ENCODE measurements at regions of chr11 and their contacts with region 1.

Region 1: DNA sequence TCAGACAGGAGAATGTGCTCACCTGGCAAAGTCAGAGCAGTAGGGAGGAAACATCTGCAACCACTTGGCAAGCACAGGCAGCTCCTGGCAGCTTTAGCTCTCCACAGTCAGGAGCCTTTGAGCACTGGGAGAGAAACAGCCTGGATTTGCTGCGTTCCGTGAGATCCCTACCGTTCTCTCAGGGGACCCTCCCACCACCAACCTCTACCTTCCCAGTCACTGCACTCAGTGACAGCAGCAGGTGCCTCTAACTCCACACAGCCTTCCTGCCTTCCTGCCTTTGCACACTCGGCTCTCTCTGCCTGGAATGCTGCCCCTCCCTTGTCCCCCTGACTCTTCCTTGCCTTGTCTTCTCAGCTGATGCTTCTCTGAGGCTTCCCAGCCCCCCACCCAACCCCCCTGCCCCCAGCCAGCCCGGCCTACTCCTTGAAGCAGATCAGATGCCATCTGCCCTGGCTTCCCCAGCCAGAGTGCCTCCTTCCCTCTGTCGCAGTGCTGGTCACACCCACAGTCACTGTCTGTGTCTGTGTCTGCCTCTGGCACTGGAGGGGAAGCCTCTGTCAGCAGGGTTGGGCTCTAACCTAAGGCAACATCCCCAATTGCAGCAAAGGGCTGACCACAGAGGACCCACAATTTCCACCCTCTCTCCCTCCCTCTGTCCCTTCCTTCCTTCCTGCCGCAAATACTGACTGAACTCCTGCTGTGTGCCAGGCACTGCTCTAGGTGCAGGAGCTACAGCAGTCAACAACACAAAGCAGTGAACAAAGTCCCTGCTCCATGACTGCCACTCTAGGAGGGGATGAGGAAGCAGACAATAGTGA is 14.9 kb upstream of the TSKU start:
- DNase-seq: no peak
- H3K4me3 ChIP-seq: no peak overlapping the region
- H3K4me3 Mint-ChIP-seq: no peak overlapping the region
- H3K27ac Mint-ChIP-seq: peak overlapping the region; percentile 22
- H3K4me1 ChIP-seq: peaks cover 51% of the 10 kb centered on the region
- H3K4me1 Mint-ChIP-seq: peaks cover 46% of the 10 kb centered on the region
- H3K27me3 ChIP-seq: no peaks in the 10 kb centered on the region
- H3K27me3 Mint-ChIP-seq: no peaks in the 10 kb centered on the region
- CTCF ChIP-seq: no peak

Region 2: GRCh38 chr11:76637491-76638269 is 130.6 kb before region 1 on chr11:
- CTCF ChIA-PET with region 1: no interaction called
- POLR2A ChIA-PET with region 1: no interaction called
- intact Hi-C with region 1: no loop called
- DNase-seq: no peak
- H3K4me3 ChIP-seq: no peak overlapping the region
- H3K4me3 Mint-ChIP-seq: no peak overlapping the region
- H3K27ac Mint-ChIP-seq: no peak overlapping the region
- H3K4me1 ChIP-seq: no peaks in the 10 kb centered on the region
- H3K4me1 Mint-ChIP-seq: no peaks in the 10 kb centered on the region
- H3K27me3 ChIP-seq: peaks cover 3% of the 10 kb centered on the region
- H3K27me3 Mint-ChIP-seq: peaks cover 14% of the 10 kb centered on the region
- CTCF ChIP-seq: no peak

Region 3: DNA sequence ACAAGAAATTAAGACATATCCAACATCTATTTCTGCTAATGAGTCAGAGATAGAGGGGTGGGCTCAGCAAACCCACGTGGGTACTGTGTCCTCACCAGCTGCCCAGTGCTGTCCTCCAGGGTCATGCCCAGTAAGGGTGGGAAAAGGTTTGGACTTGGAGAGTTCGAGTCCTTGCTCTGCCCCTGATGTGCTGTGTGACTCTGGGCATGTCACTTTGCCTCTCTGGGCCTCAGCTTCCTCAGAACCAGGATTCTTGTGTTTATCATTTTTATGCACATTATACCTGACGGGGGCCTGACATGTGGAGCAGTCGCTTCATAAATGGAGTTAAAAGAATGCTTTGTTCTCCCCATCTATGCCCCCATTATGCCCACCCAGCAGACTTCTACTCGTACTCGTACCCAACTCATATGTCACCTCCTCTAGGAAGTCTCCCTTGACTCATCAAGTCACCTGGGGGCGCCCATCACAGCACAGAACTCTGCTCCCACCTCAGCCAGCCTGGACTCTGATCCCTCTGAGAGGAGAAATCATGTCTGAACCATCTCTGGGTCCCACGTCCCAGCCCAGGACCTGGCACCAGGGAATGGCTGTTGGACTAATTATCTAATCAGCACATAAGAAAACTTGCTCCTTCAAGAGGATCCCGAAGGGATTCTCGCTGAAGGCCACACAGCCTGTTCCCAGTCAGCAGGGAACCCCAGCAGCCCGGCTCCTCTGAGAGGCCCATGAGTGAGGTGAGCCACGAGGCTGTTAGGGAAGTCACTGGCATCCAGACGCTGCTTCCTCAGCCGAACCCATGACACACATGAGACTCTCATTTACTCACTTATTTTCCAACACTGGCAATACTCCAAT is 23.9 kb before region 1 on chr11:
- CTCF ChIA-PET with region 1: no interaction called
- POLR2A ChIA-PET with region 1: no interaction called
- intact Hi-C with region 1: loop called (anchors 2 kb)
- DNase-seq: no peak
- H3K4me3 ChIP-seq: no peak overlapping the region
- H3K4me3 Mint-ChIP-seq: no peak overlapping the region
- H3K27ac Mint-ChIP-seq: no peak overlapping the region
- H3K4me1 ChIP-seq: peaks cover 17% of the 10 kb centered on the region
- H3K4me1 Mint-ChIP-seq: peaks cover 18% of the 10 kb centered on the region
- H3K27me3 ChIP-seq: no peaks in the 10 kb centered on the region
- H3K27me3 Mint-ChIP-seq: no peaks in the 10 kb centered on the region
- CTCF ChIP-seq: no peak

Region 4: GRCh38 chr11:76801225-76801624 is 32.9 kb after region 1 on chr11:
- CTCF ChIA-PET with region 1: interaction called, 4 read pairs
- POLR2A ChIA-PET with region 1: no interaction called
- intact Hi-C with region 1: loop called (anchors 2 kb)
- DNase-seq: no peak
- H3K4me3 ChIP-seq: no peak overlapping the region
- H3K4me3 Mint-ChIP-seq: no peak overlapping the region
- H3K27ac Mint-ChIP-seq: no peak overlapping the region
- H3K4me1 ChIP-seq: peaks cover 23% of the 10 kb centered on the region
- H3K4me1 Mint-ChIP-seq: peaks cover 7% of the 10 kb centered on the region
- H3K27me3 ChIP-seq: no peaks in the 10 kb centered on the region
- H3K27me3 Mint-ChIP-seq: no peaks in the 10 kb centered on the region
- CTCF ChIP-seq: no peak

Region 5: GRCh38 chr11:77066229-77067042 is 298.1 kb after region 1 on chr11 and contains the start of gene CAPN5:
- CTCF ChIA-PET with region 1: no interaction called
- POLR2A ChIA-PET with region 1: no interaction called
- intact Hi-C with region 1: no loop called
- DNase-seq: peak; percentile 96 to 100
- H3K4me3 ChIP-seq: peak within 1 kb of the TSS; percentile 82
- H3K4me3 Mint-ChIP-seq: peak within 1 kb of the TSS; percentile 88
- H3K27ac Mint-ChIP-seq: peak within 1 kb of the TSS; percentile 69
- H3K4me1 ChIP-seq: peaks cover 18% of the 10 kb centered on the region
- H3K4me1 Mint-ChIP-seq: peaks cover 22% of the 10 kb centered on the region
- H3K27me3 ChIP-seq: no peaks in the 10 kb centered on the region
- H3K27me3 Mint-ChIP-seq: no peaks in the 10 kb centered on the region
- CTCF ChIP-seq: peak in 1 of 2 experiments; percentile 81
- total RNA-seq, gene CAPN5: 18.8 and 21.2 TPM in 2 replicates